ENCODE measurements at regions of chr18 and their contacts with region 1.

Region 1: DNA sequence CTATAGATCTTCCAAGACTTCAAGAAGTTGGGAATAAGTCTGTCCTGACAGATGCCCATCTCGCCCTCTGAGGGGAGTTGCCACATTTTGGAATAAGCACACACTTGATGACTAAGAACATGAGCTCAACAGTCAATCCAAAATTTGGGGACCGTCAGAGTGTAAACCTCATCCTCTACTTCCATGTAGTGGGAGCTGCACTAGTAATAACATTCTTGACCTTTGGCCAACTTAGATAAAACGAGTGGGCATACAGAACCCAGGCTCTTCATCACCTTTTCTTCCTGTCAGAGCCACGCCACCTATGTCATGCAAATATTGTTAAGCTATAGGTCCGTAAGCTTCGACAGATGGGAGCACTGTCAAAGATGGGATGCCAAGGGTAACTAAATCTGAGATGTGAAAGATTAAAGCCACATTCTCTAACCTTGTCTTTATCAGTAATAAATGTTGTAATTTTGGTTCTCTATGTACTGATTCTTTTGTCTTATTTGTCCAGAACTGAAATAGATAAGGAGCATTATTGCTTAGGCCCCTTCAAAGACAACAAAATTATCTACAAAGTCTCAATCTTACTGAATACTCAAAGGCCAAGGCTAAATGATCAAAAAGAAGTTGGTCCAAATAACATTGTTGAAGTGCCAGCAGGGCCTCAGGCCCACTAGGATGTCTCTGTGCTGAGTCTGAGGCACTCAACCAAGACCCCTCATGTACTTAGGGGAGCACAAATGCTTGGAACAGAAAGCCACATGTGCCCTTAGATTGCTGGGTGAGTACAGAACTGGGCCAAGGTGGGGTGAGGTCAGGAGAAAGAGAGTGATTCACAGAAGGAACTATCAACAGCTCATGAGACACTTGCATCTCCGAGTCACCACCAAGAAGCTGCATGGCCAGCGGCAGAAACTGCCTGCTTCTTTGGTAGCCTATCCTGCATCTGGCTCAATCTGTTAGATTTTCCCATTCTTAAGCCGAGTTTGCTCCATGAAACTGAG is 15.0 kb downstream of the CDH2 start:
- DNase-seq: no peak
- ATAC-seq: peak in 7 of 8 donors; percentile 15 to 55 (median 36)
- H3K4me3 ChIP-seq: no peak overlapping the region
- H3K27ac ChIP-seq: peak overlapping the region in 7 of 10 donors; percentile 38 to 83 (median 70)
- H3K4me1 ChIP-seq: peaks cover 0 to 96% (median 33%) of the 10 kb centered on the region in 9 donors
- H3K27me3 ChIP-seq: no peaks in the 10 kb centered on the region
- CTCF ChIP-seq: no peak

Region 2: DNA sequence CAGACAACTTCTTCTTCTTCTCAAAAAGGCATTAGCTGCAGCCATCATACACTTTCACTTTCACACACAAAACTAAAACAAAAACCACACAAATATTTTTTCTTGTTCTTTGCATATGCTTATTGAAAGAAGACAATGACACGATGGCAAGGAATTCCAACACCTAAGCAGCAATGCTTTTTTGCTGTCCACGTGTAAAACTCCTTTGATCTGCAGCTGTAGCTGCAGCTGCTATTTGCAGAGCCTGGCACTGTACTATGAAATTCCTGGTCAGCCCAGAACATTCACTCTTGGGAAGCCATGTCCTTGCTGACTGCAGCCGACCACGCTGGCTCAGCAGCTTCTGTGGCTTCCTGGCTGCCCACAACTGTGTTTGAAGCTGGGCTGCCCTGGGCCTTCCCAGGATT is 301.2 kb before region 1 on chr18:
- intact Hi-C with region 1: loop called in 1 of 10 experiments (anchors 10 kb)
- DNase-seq: peak; percentile 6 to 12
- ATAC-seq: peak in 7 of 8 donors; percentile 66 to 90 (median 84)
- H3K4me3 ChIP-seq: no peak overlapping the region
- H3K27ac ChIP-seq: peak overlapping the region in 4 of 10 donors; percentile 15 to 39 (median 29)
- H3K4me1 ChIP-seq: peaks cover 0 to 33% (median 0%) of the 10 kb centered on the region in 9 donors
- H3K27me3 ChIP-seq: no peaks in the 10 kb centered on the region
- CTCF ChIP-seq: no peak

Region 3: GRCh38 chr18:28013066-28013465 is 148.8 kb before region 1 on chr18:
- intact Hi-C with region 1: loop called in 1 of 10 experiments (anchors 10 kb)
- DNase-seq: no peak
- ATAC-seq: no peak
- H3K4me3 ChIP-seq: no peak overlapping the region
- H3K27ac ChIP-seq: no peak overlapping the region
- H3K4me1 ChIP-seq: peaks cover 0 to 25% (median 0%) of the 10 kb centered on the region in 9 donors
- H3K27me3 ChIP-seq: no peaks in the 10 kb centered on the region
- CTCF ChIP-seq: peak in 7 of 9 donors; percentile 20 to 41 (median 36)

Region 4: DNA sequence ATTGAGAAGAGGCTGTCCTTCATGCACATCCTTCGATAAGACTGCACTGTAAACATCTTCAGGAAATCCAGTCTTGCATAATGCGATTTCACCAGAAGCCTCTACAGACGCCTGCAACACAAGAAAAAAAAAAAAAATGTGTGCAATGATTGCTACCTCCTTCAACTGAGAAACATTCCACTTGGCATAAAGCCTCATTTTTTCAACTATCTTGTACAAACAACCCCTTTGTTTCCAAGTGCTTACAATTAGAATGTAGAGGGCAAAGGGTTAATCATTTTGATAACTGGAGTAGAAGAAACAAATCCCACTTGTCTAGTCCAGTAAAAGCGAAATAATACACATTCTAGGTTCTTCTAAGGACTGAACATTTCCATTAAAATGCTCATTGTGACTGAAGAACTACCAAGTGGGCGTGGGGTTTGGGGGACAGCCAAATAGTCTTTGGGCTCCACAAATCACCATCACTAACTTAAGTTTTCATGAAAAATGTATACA is 14.2 kb before region 1 on chr18:
- intact Hi-C with region 1: loop called in 1 of 10 experiments (anchors 2 kb)
- DNase-seq: no peak
- ATAC-seq: no peak
- H3K4me3 ChIP-seq: no peak overlapping the region
- H3K27ac ChIP-seq: peak overlapping the region in 4 of 10 donors; percentile 0 to 39 (median 10)
- H3K4me1 ChIP-seq: peaks cover 0 to 75% (median 31%) of the 10 kb centered on the region in 9 donors
- H3K27me3 ChIP-seq: no peaks in the 10 kb centered on the region
- CTCF ChIP-seq: no peak

Measured in heart right ventricle (tissue), 16 donors.